ENCODE measurements at regions of chrX and their contacts with region 1.

Region 1: DNA sequence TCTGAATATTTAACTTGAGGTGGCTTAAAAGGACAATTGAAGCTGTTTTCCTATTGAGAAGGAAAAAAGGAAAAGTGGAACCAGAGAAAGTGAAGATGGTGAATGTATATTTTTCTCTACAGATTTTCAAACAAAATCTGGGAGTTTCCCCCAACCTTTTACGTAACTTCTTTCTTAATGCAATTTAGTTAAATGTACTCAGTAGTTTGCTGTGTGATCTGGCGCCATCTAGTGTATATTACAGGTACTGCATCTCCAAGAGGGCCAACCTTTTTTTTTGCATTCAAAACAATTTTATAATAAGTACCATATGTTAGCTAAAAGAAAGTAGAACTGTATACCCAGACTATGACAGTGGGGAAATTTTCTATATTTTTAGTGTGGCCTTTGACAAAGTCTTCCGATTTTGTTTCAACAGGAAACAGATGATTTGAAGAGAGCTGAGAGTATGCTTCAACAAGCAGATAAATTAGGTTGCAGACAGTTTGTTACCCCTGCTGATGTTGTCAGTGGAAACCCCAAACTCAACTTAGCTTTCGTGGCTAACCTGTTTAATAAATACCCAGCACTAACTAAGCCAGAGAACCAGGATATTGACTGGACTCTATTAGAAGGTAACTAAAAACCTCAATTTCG is 82.0 kb downstream of the PLS3 start:
- DNase-seq: peak; percentile 14
- H3K4me3 ChIP-seq: no peak overlapping the region
- H3K27ac ChIP-seq: no peak overlapping the region
- H3K4me1 ChIP-seq: no peaks in the 10 kb centered on the region
- H3K27me3 ChIP-seq: no peaks in the 10 kb centered on the region
- CTCF ChIP-seq: peak; percentile 77 to 100 (median 82)
- EP300 ChIP-seq: no peak
- POLR2A ChIP-seq: no peak

Region 2: GRCh38 chrX:115324194-115324593 is 318.8 kb before region 1 on chrX:
- in situ Hi-C with region 1: loop called in 1 of 4 experiments (anchors 10 kb)
- intact Hi-C with region 1: no loop called
- DNase-seq: no peak
- H3K4me3 ChIP-seq: no peak overlapping the region
- H3K27ac ChIP-seq: no peak overlapping the region
- H3K4me1 ChIP-seq: no peaks in the 10 kb centered on the region
- H3K27me3 ChIP-seq: no peaks in the 10 kb centered on the region
- CTCF ChIP-seq: no peak
- EP300 ChIP-seq: no peak
- POLR2A ChIP-seq: no peak

Region 3: GRCh38 chrX:115330498-115331168 is 312.4 kb before region 1 on chrX:
- in situ Hi-C with region 1: loop called in 2 of 4 experiments (anchors 10 kb)
- intact Hi-C with region 1: loop called (anchors 5 kb)
- DNase-seq: peak; percentile 21
- H3K4me3 ChIP-seq: no peak overlapping the region
- H3K27ac ChIP-seq: no peak overlapping the region
- H3K4me1 ChIP-seq: no peaks in the 10 kb centered on the region
- H3K27me3 ChIP-seq: no peaks in the 10 kb centered on the region
- CTCF ChIP-seq: peak; percentile 62 to 87 (median 64)
- EP300 ChIP-seq: no peak
- POLR2A ChIP-seq: no peak

Measured in transverse colon (tissue), 4 donors.